CD8-positive, alpha-beta T cell (primary cell): ENCODE measurements at regions of chr1 and their contacts with region 1.

Region 1: GRCh38 chr1:202348509-202349205 is at the start of gene PPP1R12B:
- DNase-seq: peak; percentile 90 to 98 (median 95)
- ATAC-seq: peak; percentile 96
- H3K4me3 ChIP-seq: peak within 1 kb of the TSS; percentile 89 to 96
- H3K4me3 Mint-ChIP-seq: peak within 1 kb of the TSS; percentile 86
- H3K27ac ChIP-seq: peak within 1 kb of the TSS; percentile 61 to 68
- H3K27ac Mint-ChIP-seq: peak within 1 kb of the TSS; percentile 92
- H3K4me1 ChIP-seq: peaks cover 17% of the 10 kb centered on the region
- H3K4me1 Mint-ChIP-seq: peaks cover 38% of the 10 kb centered on the region
- H3K27me3 ChIP-seq: no peaks in the 10 kb centered on the region
- H3K27me3 Mint-ChIP-seq: no peaks in the 10 kb centered on the region
- CTCF ChIP-seq: no peak
- total RNA-seq, gene PPP1R12B: 11.6 to 12.3 TPM

Region 2: GRCh38 chr1:201828820-201829774 is 519.6 kb before region 1 on chr1 and contains the start of gene IPO9:
- CTCF ChIA-PET with region 1: no interaction called
- POLR2A ChIA-PET with region 1: no interaction called
- intact Hi-C with region 1: loop called (anchors 1 to 5 kb)
- DNase-seq: peak; percentile 89 to 96 (median 95)
- ATAC-seq: peak; percentile 96
- H3K4me3 ChIP-seq: peak within 1 kb of the TSS; percentile 95 to 100
- H3K4me3 Mint-ChIP-seq: peak within 1 kb of the TSS; percentile 97
- H3K27ac ChIP-seq: peak within 1 kb of the TSS; percentile 90
- H3K27ac Mint-ChIP-seq: peak within 1 kb of the TSS; percentile 93
- H3K4me1 ChIP-seq: peaks cover 34% of the 10 kb centered on the region
- H3K4me1 Mint-ChIP-seq: peaks cover 42% of the 10 kb centered on the region
- H3K27me3 ChIP-seq: no peaks in the 10 kb centered on the region
- H3K27me3 Mint-ChIP-seq: no peaks in the 10 kb centered on the region
- CTCF ChIP-seq: peak; percentile 96
- total RNA-seq, gene IPO9: 14.4 to 19.2 TPM

Region 3: DNA sequence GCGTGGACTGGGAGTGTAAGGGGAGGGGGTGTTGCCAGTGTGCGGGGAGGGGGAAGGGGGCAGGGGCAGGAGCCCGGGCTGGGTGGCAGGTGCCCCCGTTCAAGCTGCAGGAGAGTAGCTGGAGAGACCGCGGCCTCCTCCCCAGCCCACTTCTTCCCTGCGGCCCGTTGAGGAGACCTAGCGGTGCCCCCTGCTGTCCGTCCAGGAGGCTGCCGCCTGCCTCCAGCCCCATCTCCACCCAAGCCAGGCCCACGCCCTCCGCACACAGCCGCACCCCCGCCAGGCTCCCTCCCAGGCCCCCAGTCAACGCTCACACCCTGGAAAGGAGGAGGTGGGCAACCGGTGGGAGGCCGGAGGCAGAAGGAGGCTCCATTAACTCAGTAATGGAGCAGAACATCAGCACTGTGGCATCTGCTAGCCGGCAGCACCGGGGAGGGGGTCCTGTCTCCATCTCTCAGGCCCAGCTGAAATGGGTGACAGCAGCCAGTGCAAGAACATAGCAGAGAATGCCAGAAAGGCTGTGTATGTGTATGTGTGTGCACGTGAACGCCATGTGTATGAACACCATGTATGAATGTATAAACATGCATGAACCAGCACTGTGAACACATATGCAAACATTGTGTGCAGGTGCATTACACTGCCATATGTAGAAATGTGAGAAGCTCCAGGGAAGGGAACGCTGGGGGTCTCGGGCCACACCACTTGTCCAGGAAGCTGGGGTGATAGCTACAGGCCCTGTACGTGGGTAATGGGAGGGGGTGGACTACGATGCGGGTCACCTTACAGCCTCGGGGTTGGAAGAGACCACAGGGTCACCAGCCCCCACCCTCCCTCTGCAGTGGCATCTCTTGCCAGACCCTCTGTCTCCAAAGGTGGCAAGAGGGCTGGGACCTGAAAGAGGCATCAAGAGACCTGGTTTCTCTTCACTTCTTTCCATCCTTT is 277.0 kb after region 1 on chr1:
- CTCF ChIA-PET with region 1: interaction called, 3 read pairs
- POLR2A ChIA-PET with region 1: no interaction called
- intact Hi-C with region 1: loop called in 1 of 2 experiments (anchors 5 kb)
- DNase-seq: peak; percentile 17 to 75 (median 58)
- ATAC-seq: peak; percentile 55
- H3K4me3 ChIP-seq: no peak overlapping the region
- H3K4me3 Mint-ChIP-seq: no peak overlapping the region
- H3K27ac ChIP-seq: no peak overlapping the region
- H3K27ac Mint-ChIP-seq: no peak overlapping the region
- H3K4me1 ChIP-seq: peaks cover 47% of the 10 kb centered on the region
- H3K4me1 Mint-ChIP-seq: peaks cover 39% of the 10 kb centered on the region
- H3K27me3 ChIP-seq: peaks cover 0 to 11% of the 10 kb centered on the region in 2 experiments
- H3K27me3 Mint-ChIP-seq: peaks cover 25% of the 10 kb centered on the region
- CTCF ChIP-seq: peak; percentile 35

Region 4: DNA sequence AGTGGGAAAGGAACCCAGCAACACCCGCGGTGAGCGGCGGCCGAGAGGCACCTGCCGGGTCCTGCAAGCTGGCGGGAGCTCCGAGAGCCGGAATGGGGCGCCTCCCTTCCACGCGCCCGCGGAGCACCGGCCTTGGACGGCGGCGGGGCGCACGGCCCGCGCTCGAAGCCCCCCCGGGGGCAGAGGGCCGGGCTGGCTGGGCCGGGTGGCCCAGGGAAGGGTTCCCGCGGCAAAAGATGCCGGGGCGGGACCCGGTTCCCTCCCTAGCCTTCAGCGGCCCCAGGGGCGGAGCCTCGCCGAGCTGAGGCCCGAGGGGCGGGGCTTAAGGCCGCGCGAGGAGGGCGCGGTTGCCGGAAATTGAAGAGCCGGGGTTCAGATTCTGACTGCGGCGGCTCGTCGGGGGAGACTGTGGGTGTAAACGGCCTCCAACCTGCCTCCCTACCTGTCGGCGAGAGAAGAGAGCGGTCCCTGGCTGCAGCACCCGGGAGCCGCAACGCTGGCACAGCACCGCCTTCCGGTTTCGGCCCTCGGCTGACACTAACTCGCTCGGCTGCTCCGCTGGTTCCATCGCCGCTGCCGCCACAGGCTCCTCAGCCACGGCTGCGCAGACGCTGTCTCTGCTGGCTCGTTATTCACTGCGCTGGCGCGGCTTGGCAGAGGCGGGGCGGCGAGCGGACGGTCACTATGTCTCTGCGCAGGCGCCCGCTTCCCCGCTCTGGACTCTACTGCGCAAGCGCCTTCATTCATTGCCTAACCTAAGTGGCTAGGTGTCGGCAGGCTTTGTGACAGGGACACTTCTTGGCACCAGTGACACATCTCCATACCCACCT is 540.1 kb after region 1 on chr1 and contains the start of gene RABIF:
- CTCF ChIA-PET with region 1: no interaction called
- POLR2A ChIA-PET with region 1: interaction called, 5 read pairs
- intact Hi-C with region 1: loop called (anchors 1 to 10 kb)
- DNase-seq: peak; percentile 91 to 98 (median 96)
- ATAC-seq: peak; percentile 92
- H3K4me3 ChIP-seq: peak within 1 kb of the TSS; percentile 84 to 97
- H3K4me3 Mint-ChIP-seq: peak within 1 kb of the TSS; percentile 94
- H3K27ac ChIP-seq: peak within 1 kb of the TSS; percentile 92 to 94
- H3K27ac Mint-ChIP-seq: peak within 1 kb of the TSS; percentile 96
- H3K4me1 ChIP-seq: peaks cover 18% of the 10 kb centered on the region
- H3K4me1 Mint-ChIP-seq: peaks cover 30% of the 10 kb centered on the region
- H3K27me3 ChIP-seq: no peaks in the 10 kb centered on the region
- H3K27me3 Mint-ChIP-seq: no peaks in the 10 kb centered on the region
- CTCF ChIP-seq: no peak
- total RNA-seq, gene RABIF: 10.1 to 10.8 TPM

Region 5: GRCh38 chr1:203006948-203007871 is 658.6 kb after region 1 on chr1 and contains the start of gene TMEM183A:
- CTCF ChIA-PET with region 1: no interaction called
- POLR2A ChIA-PET with region 1: no interaction called
- intact Hi-C with region 1: loop called in 1 of 2 experiments (anchors 2 kb)
- DNase-seq: peak; percentile 87 to 98 (median 95)
- ATAC-seq: peak; percentile 90
- H3K4me3 ChIP-seq: peak within 1 kb of the TSS; percentile 92 to 97
- H3K4me3 Mint-ChIP-seq: peak within 1 kb of the TSS; percentile 97
- H3K27ac ChIP-seq: peak within 1 kb of the TSS; percentile 95 to 98
- H3K27ac Mint-ChIP-seq: peak within 1 kb of the TSS; percentile 98
- H3K4me1 ChIP-seq: peaks cover 19% of the 10 kb centered on the region
- H3K4me1 Mint-ChIP-seq: peaks cover 39% of the 10 kb centered on the region
- H3K27me3 ChIP-seq: no peaks in the 10 kb centered on the region
- H3K27me3 Mint-ChIP-seq: no peaks in the 10 kb centered on the region
- CTCF ChIP-seq: no peak
- total RNA-seq, gene TMEM183A: 201 to 214 TPM